GM10248 (cell line): ENCODE measurements at regions of chr3 and their contacts with region 1.

Region 1: DNA sequence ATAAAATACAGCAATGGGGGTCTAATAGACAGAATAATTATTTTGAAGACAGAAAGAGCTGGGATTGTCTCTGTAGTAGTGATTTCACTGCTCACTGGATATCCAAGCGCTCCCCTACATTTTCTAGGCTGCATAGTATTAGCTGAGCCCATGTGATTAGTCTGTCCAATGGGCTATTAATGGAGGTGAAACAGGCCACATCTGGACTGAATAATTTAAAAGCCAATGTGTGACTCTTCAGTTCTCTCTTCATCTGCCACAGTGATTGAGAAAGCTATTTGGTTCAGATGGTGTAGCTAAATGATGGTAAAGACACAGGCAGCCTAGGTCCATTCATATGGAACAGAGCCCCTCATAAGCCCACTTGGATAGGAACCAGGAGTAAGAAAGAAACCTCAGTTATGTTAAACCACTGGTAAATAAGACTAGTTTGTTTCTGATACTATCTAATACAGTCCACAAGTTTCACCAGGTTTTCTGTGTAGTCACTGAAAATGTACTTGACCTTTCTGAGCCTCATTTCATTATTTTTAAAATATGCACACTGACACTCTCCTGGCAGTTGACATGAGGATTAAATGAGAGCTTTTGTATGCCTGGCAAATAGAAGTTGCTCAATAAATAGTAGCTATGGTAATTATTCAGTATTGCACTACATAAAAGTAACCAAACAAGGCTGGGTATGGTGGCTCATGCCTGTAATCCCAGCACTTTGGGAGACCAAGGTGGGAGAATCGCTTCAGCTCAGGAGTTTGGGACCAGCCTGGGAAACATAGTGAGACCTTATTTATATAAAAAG is 17.0 kb upstream of the STT3B start:
- DNase-seq: no peak
- CTCF ChIP-seq: no peak

Region 2: GRCh38 chr3:31503456-31503855 is 12.2 kb before region 1 on chr3:
- CTCF ChIA-PET with region 1: interaction called, 14 read pairs
- POLR2A ChIA-PET with region 1: no interaction called
- DNase-seq: no peak
- CTCF ChIP-seq: no peak

Region 3: DNA sequence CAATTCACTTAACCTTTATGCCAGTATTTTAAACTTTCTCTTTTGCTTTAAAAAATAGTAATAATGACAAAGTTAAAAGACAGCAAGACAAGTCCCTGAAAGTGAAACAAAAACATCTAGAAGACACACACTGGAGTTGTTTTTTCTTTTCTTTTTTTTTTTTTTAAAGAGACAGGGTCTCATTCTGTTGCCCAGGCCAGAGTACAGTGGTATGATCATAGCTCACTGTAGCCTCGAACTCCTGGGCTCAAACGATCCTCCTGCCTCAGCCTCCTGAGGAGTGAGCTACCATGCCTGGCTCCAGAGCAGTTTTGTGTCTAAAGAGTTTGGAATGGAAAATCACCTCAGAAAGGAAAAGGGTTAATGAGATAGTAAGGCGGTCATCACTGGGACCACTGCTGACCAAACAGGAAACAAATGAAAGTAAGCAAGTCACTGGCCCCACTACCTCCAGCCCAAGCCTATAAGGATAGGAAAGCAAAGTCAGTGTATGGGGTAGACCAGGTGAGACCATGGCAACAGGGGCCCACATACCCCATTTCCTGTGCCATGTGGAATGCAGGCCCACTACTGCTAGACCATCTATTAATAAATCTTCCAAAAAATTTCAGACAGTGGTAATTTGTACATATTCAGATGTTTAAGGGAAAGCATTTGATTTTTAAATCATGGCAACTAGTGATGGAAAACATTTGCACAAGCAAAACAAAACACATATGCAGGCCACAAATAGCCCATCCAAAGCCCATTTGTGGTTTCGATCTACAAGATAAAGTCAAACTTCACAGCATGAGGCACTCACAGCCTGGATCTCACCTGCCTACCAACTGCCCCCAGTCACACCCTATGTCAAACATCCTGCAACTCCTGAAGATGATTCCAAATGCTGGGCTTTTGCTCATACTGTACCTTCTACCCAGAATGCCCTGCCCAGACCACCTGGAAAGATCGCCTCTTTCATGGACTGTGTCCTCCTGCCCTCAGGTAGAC is 402.8 kb after region 1 on chr3:
- CTCF ChIA-PET with region 1: no interaction called
- POLR2A ChIA-PET with region 1: no interaction called
- DNase-seq: peak; percentile 57
- CTCF ChIP-seq: no peak